Activated B cell treated with CpG ODN at 0.5 μM for 24 hours (primary cell): ENCODE measurements at regions of chr19 and their contacts with region 1.

Region 1: DNA sequence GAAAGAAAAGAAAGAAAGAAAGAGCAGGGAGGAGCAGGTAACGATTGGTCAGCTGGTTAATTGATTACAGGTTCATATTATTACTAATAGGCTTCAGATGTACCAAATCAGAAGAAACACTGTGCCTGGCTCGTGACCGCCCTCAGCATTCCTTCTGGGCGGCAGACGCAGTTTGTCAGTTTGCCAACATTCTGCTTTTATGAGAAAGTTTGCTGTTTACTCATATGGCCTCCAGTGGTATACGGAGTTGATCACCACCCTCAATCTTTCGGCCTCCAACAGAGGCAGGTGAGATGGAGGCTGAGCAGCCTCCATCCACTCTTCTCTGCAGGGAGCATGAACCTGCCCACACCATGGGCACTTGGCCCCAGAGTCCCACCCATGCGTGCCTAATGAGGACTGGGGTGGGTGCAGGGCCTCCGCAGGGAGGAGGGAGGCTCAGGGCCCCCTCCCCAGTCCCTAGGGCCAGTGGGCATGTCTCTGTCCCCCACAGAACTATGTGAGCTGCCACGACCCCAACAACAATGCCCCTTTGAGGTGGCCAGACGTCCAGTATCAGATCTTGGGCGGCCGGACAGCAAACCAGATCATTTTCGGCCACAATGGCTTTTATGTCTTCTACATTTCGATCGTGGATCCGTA is 8.8 kb downstream of the PRR22 start:
- DNase-seq: no peak
- ATAC-seq: no peak
- H3K4me3 Mint-ChIP-seq: no peak overlapping the region
- H3K27ac Mint-ChIP-seq: no peak overlapping the region
- H3K4me1 Mint-ChIP-seq: no peaks in the 10 kb centered on the region
- H3K27me3 Mint-ChIP-seq: no peaks in the 10 kb centered on the region
- CTCF ChIP-seq: no peak

Region 2: GRCh38 chr19:5753743-5754142 is 22.0 kb before region 1 on chr19:
- CTCF ChIA-PET with region 1: no interaction called
- POLR2A ChIA-PET with region 1: interaction called, 10 read pairs
- intact Hi-C with region 1: no loop called
- DNase-seq: no peak
- ATAC-seq: no peak
- H3K4me3 Mint-ChIP-seq: no peak overlapping the region
- H3K27ac Mint-ChIP-seq: no peak overlapping the region
- H3K4me1 Mint-ChIP-seq: no peaks in the 10 kb centered on the region
- H3K27me3 Mint-ChIP-seq: peaks cover 7% of the 10 kb centered on the region
- CTCF ChIP-seq: no peak

Region 3: GRCh38 chr19:5839065-5840017 is 63.6 kb after region 1 on chr19 and contains the start of gene FUT6:
- CTCF ChIA-PET with region 1: no interaction called
- POLR2A ChIA-PET with region 1: no interaction called
- intact Hi-C with region 1: no loop called
- DNase-seq: no peak
- ATAC-seq: no peak
- H3K4me3 Mint-ChIP-seq: no peak within 1 kb of the TSS
- H3K27ac Mint-ChIP-seq: no peak within 1 kb of the TSS
- H3K4me1 Mint-ChIP-seq: peaks cover 4% of the 10 kb centered on the region
- H3K27me3 Mint-ChIP-seq: peaks cover 2% of the 10 kb centered on the region
- CTCF ChIP-seq: no peak
- total RNA-seq, gene FUT6: not detected in 2 replicates

Region 4: GRCh38 chr19:6066661-6067646 is 291.2 kb after region 1 on chr19:
- CTCF ChIA-PET with region 1: no interaction called
- POLR2A ChIA-PET with region 1: no interaction called
- intact Hi-C with region 1: no loop called
- DNase-seq: no peak
- ATAC-seq: no peak
- H3K4me3 Mint-ChIP-seq: no peak overlapping the region
- H3K27ac Mint-ChIP-seq: no peak overlapping the region
- H3K4me1 Mint-ChIP-seq: peaks cover 8% of the 10 kb centered on the region
- H3K27me3 Mint-ChIP-seq: peaks cover 7% of the 10 kb centered on the region
- CTCF ChIP-seq: no peak